CD4-positive, alpha-beta T cell (primary cell): ENCODE measurements at regions of chr3 and their contacts with region 1.

Region 1: DNA sequence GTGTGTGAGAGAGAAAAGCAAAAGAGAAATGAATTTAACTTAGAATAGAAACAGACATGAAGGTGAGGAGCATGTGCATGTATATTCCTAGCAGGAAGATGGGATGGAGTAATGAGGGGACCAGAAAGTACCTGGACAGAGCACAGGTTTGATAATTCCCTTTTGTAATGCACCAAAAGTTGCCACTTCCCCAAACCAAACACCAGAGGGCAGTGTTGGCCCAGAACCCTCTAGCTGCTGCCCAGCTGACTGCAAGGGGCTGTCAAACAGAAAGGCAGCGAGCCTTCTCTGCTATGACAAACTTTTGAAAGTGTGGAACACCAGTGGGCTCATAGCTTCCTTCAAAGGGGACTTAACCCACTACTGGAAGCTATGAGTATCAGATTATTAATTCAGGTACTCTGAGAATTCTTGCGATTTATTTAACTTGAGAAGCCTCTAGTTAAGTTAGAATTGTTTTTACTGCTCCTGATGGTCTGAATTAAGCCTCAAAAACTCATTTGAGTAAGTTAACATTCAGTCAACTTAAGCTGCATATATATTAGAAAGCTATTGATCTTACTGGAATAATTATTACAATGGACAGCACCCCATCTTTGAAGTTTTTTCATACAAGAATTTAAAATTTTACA is 234.9 kb downstream of the NEK10 start:
- DNase-seq: peak; percentile 29 to 75 (median 42)
- ATAC-seq: peak; percentile 58
- H3K4me3 ChIP-seq: no peak overlapping the region
- H3K4me3 Mint-ChIP-seq: no peak overlapping the region
- H3K27ac ChIP-seq: no peak overlapping the region
- H3K27ac Mint-ChIP-seq: no peak overlapping the region
- H3K4me1 ChIP-seq: no peaks in the 10 kb centered on the region
- H3K4me1 Mint-ChIP-seq: no peaks in the 10 kb centered on the region
- H3K27me3 ChIP-seq: no peaks in the 10 kb centered on the region
- H3K27me3 Mint-ChIP-seq: peaks cover 4% of the 10 kb centered on the region
- CTCF ChIP-seq: peak; percentile 87

Region 2: DNA sequence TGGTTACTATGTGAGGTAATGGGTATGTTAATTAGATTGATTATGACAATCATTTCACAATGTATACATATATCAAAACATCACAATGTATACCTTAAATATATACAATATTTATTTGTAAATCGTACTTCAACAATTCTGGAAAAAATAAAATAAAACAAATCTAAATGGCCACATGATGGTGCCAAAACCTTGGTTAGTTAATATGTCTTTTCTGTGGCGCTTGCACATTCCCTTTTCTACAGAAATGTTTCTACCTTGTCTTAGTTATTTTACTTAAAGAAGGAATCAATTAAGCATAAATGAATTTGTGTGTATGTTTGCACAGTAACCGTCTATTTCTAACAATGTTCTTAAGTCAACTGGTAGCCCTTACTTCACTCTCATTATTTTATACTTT is 1290.9 kb before region 1 on chr3:
- CTCF ChIA-PET with region 1: no interaction called
- POLR2A ChIA-PET with region 1: no interaction called
- intact Hi-C with region 1: no loop called
- DNase-seq: no peak
- ATAC-seq: no peak
- H3K4me3 ChIP-seq: no peak overlapping the region
- H3K4me3 Mint-ChIP-seq: no peak overlapping the region
- H3K27ac ChIP-seq: no peak overlapping the region
- H3K27ac Mint-ChIP-seq: no peak overlapping the region
- H3K4me1 ChIP-seq: no peaks in the 10 kb centered on the region
- H3K4me1 Mint-ChIP-seq: no peaks in the 10 kb centered on the region
- H3K27me3 ChIP-seq: no peaks in the 10 kb centered on the region
- H3K27me3 Mint-ChIP-seq: no peaks in the 10 kb centered on the region
- CTCF ChIP-seq: no peak

Region 3: GRCh38 chr3:27467545-27467944 is 333.3 kb after region 1 on chr3:
- CTCF ChIA-PET with region 1: interaction called, 3 read pairs
- POLR2A ChIA-PET with region 1: no interaction called
- intact Hi-C with region 1: loop called in 1 of 2 experiments (anchors 5 kb)
- DNase-seq: peak in 3 of 14 experiments; percentile 65 to 66 (median 66)
- ATAC-seq: peak; percentile 92
- H3K4me3 ChIP-seq: no peak overlapping the region
- H3K4me3 Mint-ChIP-seq: no peak overlapping the region
- H3K27ac ChIP-seq: no peak overlapping the region
- H3K27ac Mint-ChIP-seq: peak overlapping the region; percentile 31
- H3K4me1 ChIP-seq: no peaks in the 10 kb centered on the region
- H3K4me1 Mint-ChIP-seq: peaks cover 32% of the 10 kb centered on the region
- H3K27me3 ChIP-seq: no peaks in the 10 kb centered on the region
- H3K27me3 Mint-ChIP-seq: no peaks in the 10 kb centered on the region
- CTCF ChIP-seq: peak; percentile 63

Region 4: GRCh38 chr3:27681245-27681748 is 547.0 kb after region 1 on chr3:
- CTCF ChIA-PET with region 1: interaction called, 3 read pairs
- POLR2A ChIA-PET with region 1: no interaction called
- intact Hi-C with region 1: loop called (anchors 1 to 2 kb)
- DNase-seq: peak in 10 of 14 experiments; percentile 8 to 85 (median 28)
- ATAC-seq: peak; percentile 91
- H3K4me3 ChIP-seq: no peak overlapping the region
- H3K4me3 Mint-ChIP-seq: peak overlapping the region; percentile 14
- H3K27ac ChIP-seq: no peak overlapping the region
- H3K27ac Mint-ChIP-seq: no peak overlapping the region
- H3K4me1 ChIP-seq: peaks cover 8% of the 10 kb centered on the region
- H3K4me1 Mint-ChIP-seq: peaks cover 11% of the 10 kb centered on the region
- H3K27me3 ChIP-seq: no peaks in the 10 kb centered on the region
- H3K27me3 Mint-ChIP-seq: peaks cover 9% of the 10 kb centered on the region
- CTCF ChIP-seq: peak; percentile 80

Region 5: GRCh38 chr3:28328188-28329151 is 1194.2 kb after region 1 on chr3:
- CTCF ChIA-PET with region 1: no interaction called
- POLR2A ChIA-PET with region 1: no interaction called
- intact Hi-C with region 1: loop called in 1 of 2 experiments (anchors 1 kb)
- DNase-seq: peak in 3 of 14 experiments; percentile 63 to 68 (median 68)
- ATAC-seq: peak; percentile 43
- H3K4me3 ChIP-seq: no peak overlapping the region
- H3K4me3 Mint-ChIP-seq: no peak overlapping the region
- H3K27ac ChIP-seq: no peak overlapping the region
- H3K27ac Mint-ChIP-seq: no peak overlapping the region
- H3K4me1 ChIP-seq: no peaks in the 10 kb centered on the region
- H3K4me1 Mint-ChIP-seq: peaks cover 20% of the 10 kb centered on the region
- H3K27me3 ChIP-seq: no peaks in the 10 kb centered on the region
- H3K27me3 Mint-ChIP-seq: no peaks in the 10 kb centered on the region
- CTCF ChIP-seq: peak; percentile 83